ENCODE measurements at regions of chr7 and their contacts with region 1.

Region 1: DNA sequence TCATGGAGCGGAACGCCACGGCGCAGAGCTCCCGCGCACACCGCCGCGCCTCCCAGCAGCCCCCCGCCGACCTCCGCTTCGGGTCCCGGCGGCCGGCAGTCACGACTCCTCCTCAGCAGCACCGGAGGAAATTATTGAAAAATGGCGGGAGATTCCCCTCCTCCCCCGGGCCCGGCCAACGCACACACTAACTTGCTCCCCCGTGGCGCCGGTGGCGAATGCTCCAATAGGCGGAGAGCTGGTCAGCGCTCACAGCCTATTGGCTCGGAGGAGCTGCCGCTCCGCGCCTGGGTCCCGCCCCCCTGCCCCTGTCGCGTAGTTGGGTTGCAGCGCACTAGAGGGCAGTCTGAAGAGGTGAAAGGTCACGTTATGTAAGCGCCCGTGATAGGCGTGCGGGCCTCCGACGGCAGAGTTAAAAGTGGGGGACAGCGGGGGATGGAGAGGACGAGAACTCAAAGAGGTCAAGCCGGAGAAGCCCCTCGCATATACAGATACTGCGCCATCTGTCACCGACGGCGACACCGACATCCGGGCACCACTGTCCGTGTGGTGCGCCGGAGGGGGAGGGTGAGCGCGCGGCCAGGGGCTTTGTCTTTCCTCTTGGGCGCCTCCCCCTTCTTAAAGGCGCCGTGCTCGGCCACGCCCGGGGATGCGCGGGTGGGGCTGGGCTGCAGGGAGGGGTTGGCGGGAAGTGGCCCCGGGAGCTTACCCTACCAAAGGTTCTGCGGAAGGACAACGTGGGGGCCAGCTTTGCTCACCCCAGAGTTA is at the start of gene BAZ1B:
- DNase-seq: peak; percentile 97
- H3K4me3 Mint-ChIP-seq: peak within 1 kb of the TSS; percentile 91
- H3K27ac Mint-ChIP-seq: peak within 1 kb of the TSS; percentile 97
- H3K4me1 Mint-ChIP-seq: peaks cover 60% of the 10 kb centered on the region
- H3K27me3 Mint-ChIP-seq: no peaks in the 10 kb centered on the region
- total RNA-seq, gene BAZ1B: 110 and 111 TPM in 2 replicates

Region 2: GRCh38 chr7:73308665-73309214 is 213.5 kb before region 1 on chr7 and contains the start of gene NSUN5:
- intact Hi-C with region 1: loop called (anchors 1 kb)
- DNase-seq: peak; percentile 88
- H3K4me3 Mint-ChIP-seq: peak within 1 kb of the TSS; percentile 100
- H3K27ac Mint-ChIP-seq: peak within 1 kb of the TSS; percentile 96
- H3K4me1 Mint-ChIP-seq: peaks cover 27% of the 10 kb centered on the region
- H3K27me3 Mint-ChIP-seq: no peaks in the 10 kb centered on the region
- total RNA-seq, gene NSUN5: 70.3 and 74.8 TPM in 2 replicates

Region 3: GRCh38 chr7:73382934-73383503 is 139.3 kb before region 1 on chr7:
- intact Hi-C with region 1: no loop called
- DNase-seq: no peak
- H3K4me3 Mint-ChIP-seq: no peak overlapping the region
- H3K27ac Mint-ChIP-seq: no peak overlapping the region
- H3K4me1 Mint-ChIP-seq: no peaks in the 10 kb centered on the region
- H3K27me3 Mint-ChIP-seq: peaks cover 15% of the 10 kb centered on the region

Region 4: DNA sequence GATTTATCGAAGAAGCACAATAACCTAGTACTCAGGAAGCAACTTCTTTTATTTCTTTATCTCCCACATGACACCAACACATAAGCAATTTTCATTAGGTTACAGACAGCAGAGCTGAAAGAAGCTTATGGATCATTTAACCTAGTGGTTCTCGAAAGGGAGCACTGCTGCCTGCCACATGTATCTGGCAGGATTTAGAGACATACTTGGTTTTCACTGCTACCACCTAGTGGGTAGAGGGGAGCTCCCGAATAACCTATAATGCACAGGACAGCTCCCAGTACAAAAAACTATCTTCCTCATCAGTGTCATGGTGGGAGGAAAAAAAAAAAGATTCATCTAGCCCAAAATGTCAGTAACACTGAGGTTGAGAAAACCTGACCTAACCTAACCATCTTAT is 54.2 kb before region 1 on chr7:
- intact Hi-C with region 1: loop called (anchors 10 kb)
- DNase-seq: no peak
- H3K4me3 Mint-ChIP-seq: no peak overlapping the region
- H3K27ac Mint-ChIP-seq: no peak overlapping the region
- H3K4me1 Mint-ChIP-seq: no peaks in the 10 kb centered on the region
- H3K27me3 Mint-ChIP-seq: no peaks in the 10 kb centered on the region

Region 5: DNA sequence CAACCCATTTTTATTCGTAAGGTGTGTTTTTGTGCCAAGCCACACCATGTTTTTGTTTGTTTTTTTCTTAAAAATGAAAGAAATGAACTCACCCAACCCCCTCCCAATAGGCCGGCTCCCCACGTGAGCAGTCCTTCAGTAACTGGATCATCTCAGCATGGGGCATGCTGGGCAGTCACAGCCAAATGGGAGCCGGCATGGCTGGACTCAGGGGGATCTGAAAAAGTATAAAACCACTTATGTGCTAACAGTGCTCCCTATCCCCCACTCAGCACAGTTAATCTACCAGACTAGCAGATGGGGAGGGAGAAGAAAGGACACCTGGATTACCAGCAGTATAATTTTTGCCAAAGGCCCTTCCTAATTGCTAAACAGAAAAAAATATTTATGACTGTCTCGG is 39.5 kb before region 1 on chr7:
- intact Hi-C with region 1: no loop called
- DNase-seq: no peak
- H3K4me3 Mint-ChIP-seq: no peak overlapping the region
- H3K27ac Mint-ChIP-seq: no peak overlapping the region
- H3K4me1 Mint-ChIP-seq: peaks cover 17% of the 10 kb centered on the region
- H3K27me3 Mint-ChIP-seq: no peaks in the 10 kb centered on the region

Region 6: GRCh38 chr7:73667344-73668102 is 145.2 kb after region 1 on chr7 and contains the start of gene VPS37D:
- intact Hi-C with region 1: loop called (anchors 1 kb)
- DNase-seq: peak; percentile 91
- H3K4me3 Mint-ChIP-seq: peak within 1 kb of the TSS; percentile 78
- H3K27ac Mint-ChIP-seq: no peak within 1 kb of the TSS
- H3K4me1 Mint-ChIP-seq: peaks cover 7% of the 10 kb centered on the region
- H3K27me3 Mint-ChIP-seq: peaks cover 36% of the 10 kb centered on the region
- total RNA-seq, gene VPS37D: 0.18 and 0.34 TPM in 2 replicates

Region 7: DNA sequence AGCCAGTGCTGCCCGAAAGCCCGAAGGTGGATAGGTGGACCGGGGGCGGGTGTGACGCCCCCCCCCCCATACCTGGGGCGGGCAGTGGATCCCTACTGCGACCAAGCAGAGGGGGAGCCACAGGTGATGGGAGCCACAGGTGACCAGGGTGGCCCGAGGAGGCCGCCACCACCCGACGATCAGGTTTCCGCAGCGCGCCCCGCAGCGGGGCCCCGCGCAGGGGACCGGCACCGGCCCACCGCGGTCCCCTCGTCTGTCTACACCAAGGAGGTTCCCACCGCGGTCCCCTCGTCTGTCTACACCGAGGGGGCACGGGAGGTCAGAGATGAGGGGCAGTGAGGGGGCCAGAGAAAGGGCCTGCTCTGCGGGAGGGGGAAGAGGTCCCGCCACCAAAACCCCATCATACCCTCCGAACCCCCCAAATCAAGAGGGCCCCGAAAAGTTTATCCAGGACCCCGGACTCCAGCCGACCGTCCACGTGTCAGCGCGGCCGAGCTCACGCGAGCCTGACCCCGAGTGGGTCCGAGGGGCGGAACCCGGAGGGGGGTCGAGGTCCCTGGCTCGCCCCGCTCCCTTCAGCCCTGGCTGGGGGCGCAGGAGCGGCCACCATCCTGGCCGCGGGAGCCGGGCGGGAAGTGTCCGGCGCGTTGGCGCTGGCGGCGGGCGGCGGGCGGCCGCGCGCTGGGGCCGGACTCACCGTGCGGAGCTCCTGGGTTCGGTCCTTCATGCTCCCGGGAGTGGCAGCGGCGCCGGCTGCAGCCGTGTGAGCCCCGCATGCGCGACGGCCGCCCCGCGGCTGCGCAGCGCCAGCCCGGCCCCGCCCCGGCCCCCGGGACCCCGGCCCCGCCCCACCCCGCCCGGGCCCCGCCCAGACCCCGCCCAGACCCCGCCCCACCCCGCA is 196.9 kb after region 1 on chr7 and contains the start of gene STX1A:
- intact Hi-C with region 1: loop called (anchors 5 kb)
- DNase-seq: peak; percentile 72
- H3K4me3 Mint-ChIP-seq: peak within 1 kb of the TSS; percentile 88
- H3K27ac Mint-ChIP-seq: peak within 1 kb of the TSS; percentile 89
- H3K4me1 Mint-ChIP-seq: peaks cover 34% of the 10 kb centered on the region
- H3K27me3 Mint-ChIP-seq: peaks cover 15% of the 10 kb centered on the region
- total RNA-seq, gene STX1A: 24.9 and 26.7 TPM in 2 replicates